Naive thymus-derived CD4-positive, alpha-beta T cell (primary cell): ENCODE measurements at regions of chr5 and their contacts with region 1.

Region 1: DNA sequence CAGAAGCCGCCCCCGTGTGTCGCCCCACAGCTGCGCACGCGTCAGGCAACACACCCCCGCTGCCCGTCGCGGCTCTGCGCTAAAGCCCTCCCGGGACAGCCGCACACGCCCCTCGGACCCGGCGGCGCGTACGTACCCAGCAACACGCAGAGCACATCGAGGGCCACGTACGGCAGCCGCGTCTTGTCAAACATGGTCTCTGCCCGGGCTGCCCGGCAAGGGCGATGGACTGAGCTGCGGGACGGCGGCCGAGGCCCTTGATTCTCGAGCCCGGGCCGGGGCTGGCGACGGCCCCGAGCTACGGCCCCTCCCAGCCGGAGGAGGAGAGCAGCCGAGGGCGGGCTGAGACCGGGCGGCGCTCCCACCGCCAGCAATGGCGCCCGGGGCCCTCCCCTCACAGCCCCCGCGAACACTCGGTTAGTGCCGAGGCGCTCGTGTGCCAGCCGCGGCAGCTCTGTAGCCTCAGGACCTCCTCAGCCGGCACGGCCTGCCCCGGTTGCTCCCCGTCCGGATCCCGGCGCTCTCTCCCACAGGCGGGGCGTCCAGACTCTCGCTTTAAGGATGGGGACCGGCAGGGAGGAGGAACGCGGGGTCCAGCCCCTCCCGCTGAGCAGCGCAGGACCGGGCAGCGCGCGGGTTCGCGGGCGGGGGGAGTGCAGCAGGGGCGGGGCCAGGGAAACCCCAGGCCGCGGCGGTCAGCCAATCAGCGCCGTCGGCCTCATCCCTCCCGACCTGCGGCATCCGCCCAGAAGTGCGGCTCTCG is at the start of gene PLPP1:
- DNase-seq: peak; percentile 74 to 91 (median 86)
- ATAC-seq: peak; percentile 91
- H3K4me3 ChIP-seq: peak within 1 kb of the TSS; percentile 83
- H3K4me3 Mint-ChIP-seq: peak within 1 kb of the TSS; percentile 86 to 97 (median 94)
- H3K27ac ChIP-seq: peak within 1 kb of the TSS; percentile 91
- H3K27ac Mint-ChIP-seq: peak within 1 kb of the TSS; percentile 79 to 96 (median 91)
- H3K4me1 ChIP-seq: peaks cover 6 to 26% of the 10 kb centered on the region in 2 donors
- H3K4me1 Mint-ChIP-seq: peaks cover 20 to 61% (median 50%) of the 10 kb centered on the region in 7 donors
- H3K27me3 ChIP-seq: no peaks in the 10 kb centered on the region
- H3K27me3 Mint-ChIP-seq: no peaks in the 10 kb centered on the region
- total RNA-seq, gene PLPP1: 8.0 to 31.3 (median 8.4) TPM

Region 2: DNA sequence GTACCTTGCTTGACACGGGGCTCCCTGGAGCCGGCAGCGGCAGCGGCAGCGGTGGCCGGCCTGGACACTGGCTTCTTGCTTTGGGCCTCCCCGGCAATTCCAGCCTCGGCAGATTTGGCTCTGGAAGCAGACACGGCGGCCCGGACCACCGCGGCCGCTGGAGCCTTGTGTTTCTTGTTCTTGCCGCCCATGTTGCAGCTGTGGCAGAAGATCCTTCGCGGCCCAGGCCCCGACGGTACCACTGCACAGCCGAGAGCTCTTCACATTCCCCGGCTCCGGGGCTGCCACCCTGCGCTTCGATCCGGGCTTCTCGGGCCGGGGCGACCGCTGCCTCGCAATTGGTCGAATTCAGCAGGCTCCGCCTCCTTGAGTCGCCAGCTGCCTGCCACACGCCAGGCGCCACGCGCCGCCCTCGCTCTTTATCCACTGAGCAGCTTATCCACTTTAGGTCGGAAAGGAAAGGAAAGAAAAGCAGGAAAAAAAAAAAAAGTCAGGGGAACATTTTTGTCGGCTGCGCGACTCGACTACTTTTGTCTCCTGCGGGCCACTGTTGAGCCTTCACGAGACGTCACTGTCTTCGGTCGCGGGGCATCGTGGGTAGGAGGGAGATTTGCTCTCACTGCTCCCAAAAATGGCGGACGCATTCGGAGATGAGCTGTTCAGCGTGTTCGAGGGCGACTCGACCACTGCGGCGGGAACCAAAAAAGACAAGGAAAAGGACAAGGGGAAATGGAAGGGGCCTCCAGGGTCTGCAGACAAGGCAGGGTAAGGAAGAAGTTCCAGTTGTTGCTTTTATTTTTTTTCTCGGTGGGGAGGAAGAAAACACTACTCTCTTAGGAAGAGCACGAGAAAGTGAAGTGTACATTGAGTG is 227.0 kb before region 1 on chr5 and contains the starts of genes DHX29 and MTREX:
- CTCF ChIA-PET with region 1: no interaction called
- POLR2A ChIA-PET with region 1: no interaction called
- intact Hi-C with region 1: loop called (anchors 2 kb)
- DNase-seq: peak; percentile 85 to 93 (median 91)
- ATAC-seq: peak; percentile 94
- H3K4me3 ChIP-seq: peak within 1 kb of the TSS; percentile 97
- H3K4me3 Mint-ChIP-seq: no peak within 1 kb of the TSS
- H3K27ac ChIP-seq: peak within 1 kb of the TSS; percentile 89
- H3K27ac Mint-ChIP-seq: no peak within 1 kb of the TSS
- H3K4me1 ChIP-seq: peaks cover 28 to 33% of the 10 kb centered on the region in 2 donors
- H3K4me1 Mint-ChIP-seq: peaks cover 15 to 34% (median 21%) of the 10 kb centered on the region in 7 donors
- H3K27me3 ChIP-seq: no peaks in the 10 kb centered on the region
- H3K27me3 Mint-ChIP-seq: no peaks in the 10 kb centered on the region
- total RNA-seq, gene DHX29: 12.5 to 19.2 (median 15.9) TPM
- total RNA-seq, gene MTREX: 64.0 to 83.7 (median 66.3) TPM

Region 3: DNA sequence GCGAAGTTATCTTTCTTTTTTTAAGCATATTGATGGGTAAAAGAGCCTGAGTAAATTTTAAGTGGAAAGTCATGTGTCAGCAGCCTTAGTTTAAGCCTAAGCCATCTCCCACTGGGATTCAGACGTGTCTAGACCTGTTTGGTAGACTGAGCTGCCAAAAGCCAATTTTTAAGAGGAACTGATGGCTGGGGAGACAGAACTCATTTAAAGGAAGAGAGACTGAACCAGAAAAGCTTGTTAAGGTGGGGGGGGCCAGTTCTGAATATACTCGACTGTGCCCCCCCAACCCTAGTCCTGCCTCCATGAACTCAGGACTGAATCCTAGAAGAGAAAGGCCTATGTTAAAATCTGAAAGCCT is 58.5 kb after region 1 on chr5:
- CTCF ChIA-PET with region 1: no interaction called
- POLR2A ChIA-PET with region 1: no interaction called
- intact Hi-C with region 1: loop called in 1 of 2 experiments (anchors 1 kb)
- DNase-seq: no peak
- ATAC-seq: no peak
- H3K4me3 ChIP-seq: no peak overlapping the region
- H3K4me3 Mint-ChIP-seq: no peak overlapping the region
- H3K27ac ChIP-seq: no peak overlapping the region
- H3K27ac Mint-ChIP-seq: peak overlapping the region in 1 of 9 donors; percentile 25
- H3K4me1 ChIP-seq: peaks cover 0 to 6% of the 10 kb centered on the region in 2 donors
- H3K4me1 Mint-ChIP-seq: peaks cover 10 to 41% (median 13%) of the 10 kb centered on the region in 7 donors
- H3K27me3 ChIP-seq: no peaks in the 10 kb centered on the region
- H3K27me3 Mint-ChIP-seq: no peaks in the 10 kb centered on the region

Region 4: DNA sequence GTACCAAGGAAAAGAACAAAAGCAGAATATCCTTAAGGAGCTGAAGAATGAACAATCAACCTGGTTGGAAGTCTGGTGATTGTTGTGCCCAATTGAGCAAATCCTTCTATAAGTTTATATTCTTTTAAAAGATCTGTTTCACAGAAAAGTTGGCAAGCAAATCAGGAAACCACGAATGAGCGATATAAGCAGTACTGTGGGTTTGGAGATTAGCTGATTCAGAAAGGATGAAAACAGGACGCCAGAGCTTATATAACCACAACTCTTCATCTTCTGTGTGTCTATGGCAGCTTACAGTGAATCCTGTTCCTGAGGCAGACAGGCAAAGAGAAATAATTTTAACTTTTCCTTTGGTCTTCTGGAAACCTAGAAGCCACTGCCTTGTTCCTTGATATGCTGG is 115.8 kb after region 1 on chr5:
- CTCF ChIA-PET with region 1: no interaction called
- POLR2A ChIA-PET with region 1: interaction called, 3 read pairs
- intact Hi-C with region 1: loop called (anchors 1 to 2 kb)
- DNase-seq: peak in 7 of 9 donors; percentile 27 to 76 (median 65)
- ATAC-seq: peak; percentile 84
- H3K4me3 ChIP-seq: no peak overlapping the region
- H3K4me3 Mint-ChIP-seq: peak overlapping the region in 9 of 10 donors; percentile 2 to 83 (median 50)
- H3K27ac ChIP-seq: no peak overlapping the region
- H3K27ac Mint-ChIP-seq: peak overlapping the region; percentile 60 to 93 (median 74)
- H3K4me1 ChIP-seq: peaks cover 0 to 22% of the 10 kb centered on the region in 2 donors
- H3K4me1 Mint-ChIP-seq: peaks cover 2 to 44% (median 33%) of the 10 kb centered on the region in 7 donors
- H3K27me3 ChIP-seq: no peaks in the 10 kb centered on the region
- H3K27me3 Mint-ChIP-seq: no peaks in the 10 kb centered on the region

Region 5: GRCh38 chr5:55711968-55712859 is 177.6 kb after region 1 on chr5 and contains the start of gene SLC38A9:
- CTCF ChIA-PET with region 1: no interaction called
- POLR2A ChIA-PET with region 1: no interaction called
- intact Hi-C with region 1: loop called (anchors 1 kb)
- DNase-seq: peak; percentile 82 to 91 (median 90)
- ATAC-seq: peak; percentile 100
- H3K4me3 ChIP-seq: peak within 1 kb of the TSS; percentile 87
- H3K4me3 Mint-ChIP-seq: peak within 1 kb of the TSS; percentile 94 to 99 (median 98)
- H3K27ac ChIP-seq: peak within 1 kb of the TSS; percentile 72
- H3K27ac Mint-ChIP-seq: peak within 1 kb of the TSS; percentile 76 to 97 (median 91)
- H3K4me1 ChIP-seq: peaks cover 12 to 16% of the 10 kb centered on the region in 2 donors
- H3K4me1 Mint-ChIP-seq: peaks cover 20 to 40% (median 29%) of the 10 kb centered on the region in 7 donors
- H3K27me3 ChIP-seq: no peaks in the 10 kb centered on the region
- H3K27me3 Mint-ChIP-seq: peaks cover 0 to 3% (median 0%) of the 10 kb centered on the region in 5 donors
- total RNA-seq, gene SLC38A9: 17.7 to 32.6 (median 30.4) TPM